Endothelial cell of umbilical vein (primary cell): ENCODE measurements at regions of chr11 and their contacts with region 1.

Region 1: GRCh38 chr11:76577199-76577920 is 93.2 kb downstream of the LRRC32 start:
- DNase-seq: peak; percentile 71
- H3K4me3 ChIP-seq: no peak overlapping the region
- H3K27ac ChIP-seq: peak overlapping the region; percentile 85
- H3K4me1 ChIP-seq: peaks cover 39% of the 10 kb centered on the region
- H3K27me3 ChIP-seq: no peaks in the 10 kb centered on the region
- CTCF ChIP-seq: no peak
- POLR2A ChIP-seq: no peak

Region 2: GRCh38 chr11:76436020-76436419 is 141.3 kb before region 1 on chr11:
- CTCF ChIA-PET with region 1: no interaction called
- POLR2A ChIA-PET with region 1: no interaction called
- dilution Hi-C with region 1: no loop called
- intact Hi-C with region 1: no loop called
- DNase-seq: no peak
- H3K4me3 ChIP-seq: no peak overlapping the region
- H3K27ac ChIP-seq: no peak overlapping the region
- H3K4me1 ChIP-seq: no peaks in the 10 kb centered on the region
- H3K27me3 ChIP-seq: peaks cover 0 to 2% of the 10 kb centered on the region in 2 experiments
- CTCF ChIP-seq: no peak
- POLR2A ChIP-seq: no peak

Region 3: DNA sequence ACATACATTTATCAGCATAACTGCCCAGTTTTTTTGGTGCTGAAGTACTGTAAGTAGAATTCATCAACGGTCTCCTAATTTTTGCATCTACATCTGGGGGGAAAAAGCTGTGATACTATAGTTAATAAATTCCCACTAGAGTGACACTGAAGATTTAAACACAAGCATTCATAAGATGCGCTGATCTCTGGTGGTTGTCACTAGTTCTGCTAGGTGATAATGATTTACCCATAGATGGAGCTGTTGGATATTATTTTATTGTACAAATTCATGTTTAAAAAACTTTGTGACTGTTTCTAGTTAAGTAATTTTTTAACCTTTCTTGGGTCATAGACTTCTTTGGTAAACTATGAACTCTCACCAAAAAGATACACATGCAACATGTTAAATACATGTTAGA is 26.0 kb before region 1 on chr11:
- CTCF ChIA-PET with region 1: interaction called, 6 read pairs
- POLR2A ChIA-PET with region 1: no interaction called
- dilution Hi-C with region 1: no loop called
- intact Hi-C with region 1: loop called (anchors 1 kb)
- DNase-seq: peak; percentile 65
- H3K4me3 ChIP-seq: no peak overlapping the region
- H3K27ac ChIP-seq: peak overlapping the region; percentile 42
- H3K4me1 ChIP-seq: peaks cover 42% of the 10 kb centered on the region
- H3K27me3 ChIP-seq: no peaks in the 10 kb centered on the region
- CTCF ChIP-seq: peak in 1 of 2 donors; percentile 7
- POLR2A ChIP-seq: no peak

Region 4: GRCh38 chr11:76588455-76589325 is 11.3 kb after region 1 on chr11:
- CTCF ChIA-PET with region 1: interaction called, 25 read pairs
- POLR2A ChIA-PET with region 1: interaction called, 14 read pairs
- dilution Hi-C with region 1: no loop called
- intact Hi-C with region 1: loop called (anchors 1 kb)
- DNase-seq: peak; percentile 99
- H3K4me3 ChIP-seq: no peak overlapping the region
- H3K27ac ChIP-seq: peak overlapping the region; percentile 94
- H3K4me1 ChIP-seq: peaks cover 23% of the 10 kb centered on the region
- H3K27me3 ChIP-seq: no peaks in the 10 kb centered on the region
- CTCF ChIP-seq: no peak
- POLR2A ChIP-seq: peak; percentile 88

Region 5: GRCh38 chr11:76615950-76616349 is 38.6 kb after region 1 on chr11:
- CTCF ChIA-PET with region 1: interaction called, 6 read pairs
- POLR2A ChIA-PET with region 1: no interaction called
- dilution Hi-C with region 1: no loop called
- intact Hi-C with region 1: loop called (anchors 1 kb)
- DNase-seq: peak; percentile 88
- H3K4me3 ChIP-seq: no peak overlapping the region
- H3K27ac ChIP-seq: peak overlapping the region; percentile 4
- H3K4me1 ChIP-seq: peaks cover 21% of the 10 kb centered on the region
- H3K27me3 ChIP-seq: no peaks in the 10 kb centered on the region
- CTCF ChIP-seq: no peak
- POLR2A ChIP-seq: no peak

Region 6: DNA sequence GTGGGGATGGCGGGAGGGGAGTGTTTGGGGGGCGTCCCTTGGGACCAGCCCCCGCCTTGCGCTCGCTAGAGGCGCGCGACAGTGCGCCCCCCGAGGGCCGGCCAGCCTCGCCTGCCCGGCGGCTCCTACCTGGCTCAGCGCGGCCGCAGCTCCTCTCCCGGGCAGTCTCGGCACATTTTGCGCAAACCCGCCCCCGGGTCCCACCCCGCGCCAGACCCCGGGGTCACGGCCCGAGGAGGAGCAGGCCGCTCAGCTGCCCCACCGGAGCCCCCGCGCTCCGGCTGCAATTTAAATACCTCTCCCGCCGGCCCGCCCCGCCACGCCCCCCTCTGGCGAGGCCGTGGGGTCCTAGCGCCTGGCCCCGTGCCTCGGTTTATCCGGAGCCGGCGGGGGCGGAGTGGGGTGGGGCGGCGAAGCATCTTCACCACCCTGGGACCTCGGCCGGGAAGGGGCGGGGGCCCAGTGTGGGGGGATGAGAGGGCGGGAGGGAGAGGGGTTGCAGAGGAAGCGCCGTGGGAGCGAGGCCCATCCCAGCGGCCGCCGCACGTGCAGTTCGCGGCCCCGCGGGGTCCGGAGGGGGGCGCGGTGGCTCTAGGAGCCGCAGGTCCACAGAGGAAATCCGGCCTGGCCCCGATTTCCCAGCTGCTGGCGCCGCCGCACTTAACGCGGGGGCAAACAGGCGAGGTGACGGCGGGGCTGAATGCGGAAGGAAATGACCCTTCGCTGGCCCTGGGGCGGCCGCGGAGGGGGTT is 93.3 kb after region 1 on chr11 and contains the start of gene LRRC32:
- CTCF ChIA-PET with region 1: interaction called, 134 read pairs
- POLR2A ChIA-PET with region 1: interaction called, 7 read pairs
- dilution Hi-C with region 1: no loop called
- intact Hi-C with region 1: loop called (anchors 1 kb)
- DNase-seq: peak; percentile 82
- H3K4me3 ChIP-seq: peak within 1 kb of the TSS; percentile 2 to 67 (median 59)
- H3K27ac ChIP-seq: peak within 1 kb of the TSS; percentile 79
- H3K4me1 ChIP-seq: peaks cover 53% of the 10 kb centered on the region
- H3K27me3 ChIP-seq: no peaks in the 10 kb centered on the region
- CTCF ChIP-seq: peak in 1 of 2 donors; percentile 33
- POLR2A ChIP-seq: peak; percentile 41
- total RNA-seq, gene LRRC32: 77.0 and 117 TPM in 2 replicates